Tibial artery (tissue), 4 donors: ENCODE measurements at regions of chr21 and their contacts with region 1.

Region 1: DNA sequence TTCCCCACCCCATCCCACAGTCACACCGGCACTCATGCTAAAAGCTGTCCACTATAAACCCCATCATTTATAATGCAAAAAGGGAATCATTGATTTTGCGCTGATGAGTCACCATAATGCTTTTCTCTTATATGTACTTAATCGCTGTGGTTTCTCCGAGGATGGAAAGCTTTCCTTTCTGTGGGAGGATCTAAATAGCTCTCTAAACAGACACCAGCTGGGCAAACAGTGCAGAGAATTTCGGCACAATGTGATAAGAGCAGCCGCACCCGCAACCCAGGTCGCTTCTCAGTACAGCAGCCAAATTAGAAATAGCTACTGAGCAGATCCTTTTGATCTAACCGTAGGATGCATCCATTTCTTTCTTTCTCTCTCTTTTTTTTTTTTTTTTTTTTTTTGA is 85.5 kb downstream of the SETD4 start:
- DNase-seq: no peak
- H3K4me3 ChIP-seq: no peak overlapping the region
- H3K27ac ChIP-seq: no peak overlapping the region
- H3K4me1 ChIP-seq: no peaks in the 10 kb centered on the region
- H3K27me3 ChIP-seq: no peaks in the 10 kb centered on the region
- CTCF ChIP-seq: no peak

Region 2: GRCh38 chr21:34817821-34818661 is 1156.8 kb before region 1 on chr21:
- intact Hi-C with region 1: loop called (anchors 5 kb)
- DNase-seq: no peak
- H3K4me3 ChIP-seq: no peak overlapping the region
- H3K27ac ChIP-seq: no peak overlapping the region
- H3K4me1 ChIP-seq: peaks cover 0 to 30% (median 0%) of the 10 kb centered on the region in 4 donors
- H3K27me3 ChIP-seq: no peaks in the 10 kb centered on the region
- CTCF ChIP-seq: no peak

Region 3: DNA sequence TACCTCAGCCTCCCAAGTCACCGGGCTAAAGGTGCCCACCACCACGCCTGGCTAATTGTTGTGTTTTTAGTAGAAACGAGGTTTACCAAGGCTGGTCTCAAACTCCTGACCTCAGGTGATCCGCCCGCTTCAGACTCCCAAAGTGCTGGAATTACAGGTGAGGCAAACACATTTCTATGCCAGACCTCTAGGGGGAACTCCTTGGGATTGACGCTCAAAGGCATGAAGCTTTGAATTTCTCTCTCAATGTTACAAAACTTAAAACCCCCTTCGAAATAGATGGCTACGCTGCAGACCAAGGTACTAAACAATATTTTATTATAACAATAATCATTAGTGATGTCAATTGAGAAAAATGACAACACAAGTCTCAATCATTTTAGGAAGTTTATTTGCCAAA is 244.5 kb before region 1 on chr21:
- intact Hi-C with region 1: no loop called
- DNase-seq: no peak
- H3K4me3 ChIP-seq: no peak overlapping the region
- H3K27ac ChIP-seq: no peak overlapping the region
- H3K4me1 ChIP-seq: no peaks in the 10 kb centered on the region
- H3K27me3 ChIP-seq: peaks cover 0 to 2% of the 10 kb centered on the region in 2 donors
- CTCF ChIP-seq: no peak